Activated naive CD4-positive, alpha-beta T cell treated with anti-CD3 and anti-CD28 coated beads for 36 hours (primary cell): ENCODE measurements at regions of chr5 and their contacts with region 1.

Region 1: DNA sequence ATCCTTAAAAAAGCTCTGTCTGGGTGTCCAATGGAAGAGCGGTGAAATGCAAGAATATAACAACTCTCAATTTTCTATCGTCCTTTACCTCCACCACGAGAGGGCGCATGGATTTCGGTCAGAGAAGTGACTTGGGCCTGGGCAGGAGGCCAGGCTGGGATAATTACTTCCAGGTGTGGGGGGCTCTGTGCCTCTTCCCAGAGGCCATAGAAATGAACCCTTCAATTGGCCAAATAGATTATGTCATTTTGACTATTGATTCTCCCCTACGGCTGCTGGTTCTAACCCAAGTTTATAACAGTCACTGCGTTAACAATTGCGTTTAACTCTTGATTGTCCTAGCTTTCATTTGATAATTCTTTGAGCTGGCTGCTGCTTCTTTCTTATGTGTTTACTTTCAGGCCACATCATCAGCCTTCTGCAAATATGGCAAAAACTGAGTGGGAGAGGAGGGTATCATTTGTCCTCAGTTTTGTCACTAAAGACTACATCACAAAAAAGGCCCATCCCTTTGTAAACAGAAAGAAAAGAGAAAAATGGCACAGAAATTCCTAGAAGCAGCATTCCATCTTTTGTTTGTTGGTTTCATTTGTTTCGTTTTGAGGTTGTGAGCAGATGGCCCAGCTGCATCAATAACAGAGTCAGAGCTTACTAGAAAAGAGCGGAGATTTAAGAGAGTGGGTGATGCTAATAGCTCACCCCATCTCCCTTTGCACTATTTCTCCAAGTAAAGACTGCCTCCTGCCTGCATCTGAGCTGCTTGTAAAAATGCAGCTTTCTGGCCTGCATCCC is 45.4 kb upstream of the ZFR start:
- DNase-seq: peak; percentile 83
- H3K4me3 Mint-ChIP-seq: no peak overlapping the region
- H3K27ac Mint-ChIP-seq: no peak overlapping the region
- H3K4me1 Mint-ChIP-seq: peaks cover 1% of the 10 kb centered on the region
- H3K27me3 Mint-ChIP-seq: no peaks in the 10 kb centered on the region

Region 2: DNA sequence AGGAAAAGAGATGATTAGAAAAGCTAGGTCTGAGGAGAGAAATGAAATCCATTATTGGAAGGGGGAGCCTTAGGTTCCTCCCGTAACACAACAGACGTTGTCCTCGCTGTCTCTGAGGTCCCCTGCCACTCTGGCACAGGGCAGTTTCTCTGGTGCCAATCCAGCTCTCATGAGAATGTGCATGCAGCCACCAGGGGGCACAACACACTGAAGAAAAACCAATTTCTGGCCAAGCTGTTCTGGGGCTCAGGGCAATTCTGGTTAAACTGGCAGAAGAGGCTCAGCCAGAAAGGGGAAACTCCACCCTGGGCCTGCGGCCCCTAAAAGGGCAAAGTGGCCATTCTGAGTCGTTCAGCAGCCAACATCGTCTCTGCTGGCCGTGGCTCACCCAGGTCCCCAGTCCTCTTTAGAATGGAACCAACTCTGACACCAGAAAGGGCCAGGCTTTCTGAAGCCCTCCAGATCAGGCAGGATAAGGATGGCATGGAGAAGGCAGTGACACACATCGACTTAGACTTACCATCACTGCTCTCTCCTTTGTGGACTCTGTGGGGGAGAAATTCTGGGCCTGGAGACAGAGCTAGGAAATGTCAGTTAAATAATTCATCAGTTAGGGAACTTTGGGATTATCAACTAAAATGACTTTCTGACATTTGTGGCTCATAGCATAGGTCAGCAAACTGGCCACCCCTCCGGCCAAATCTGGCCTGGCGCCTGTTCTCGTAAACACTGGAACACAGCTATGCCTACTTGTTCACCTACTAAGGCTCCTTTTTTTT is 257.4 kb before region 1 on chr5:
- CTCF ChIA-PET with region 1: interaction called, 16 read pairs
- intact Hi-C with region 1: loop called (anchors 5 kb)
- DNase-seq: peak; percentile 88
- H3K4me3 Mint-ChIP-seq: no peak overlapping the region
- H3K27ac Mint-ChIP-seq: no peak overlapping the region
- H3K4me1 Mint-ChIP-seq: peaks cover 7% of the 10 kb centered on the region
- H3K27me3 Mint-ChIP-seq: no peaks in the 10 kb centered on the region

Region 3: GRCh38 chr5:32462618-32463017 is 27.4 kb before region 1 on chr5:
- CTCF ChIA-PET with region 1: interaction called, 6 read pairs
- intact Hi-C with region 1: loop called (anchors 2 kb)
- DNase-seq: peak; percentile 71
- H3K4me3 Mint-ChIP-seq: no peak overlapping the region
- H3K27ac Mint-ChIP-seq: peak overlapping the region; percentile 89
- H3K4me1 Mint-ChIP-seq: peaks cover 13% of the 10 kb centered on the region
- H3K27me3 Mint-ChIP-seq: no peaks in the 10 kb centered on the region

Region 4: GRCh38 chr5:32504989-32505596 is 15.1 kb after region 1 on chr5:
- CTCF ChIA-PET with region 1: interaction called, 28 read pairs
- intact Hi-C with region 1: no loop called
- DNase-seq: peak; percentile 26
- H3K4me3 Mint-ChIP-seq: no peak overlapping the region
- H3K27ac Mint-ChIP-seq: no peak overlapping the region
- H3K4me1 Mint-ChIP-seq: peaks cover 17% of the 10 kb centered on the region
- H3K27me3 Mint-ChIP-seq: no peaks in the 10 kb centered on the region

Region 5: GRCh38 chr5:32600057-32600622 is 110.2 kb after region 1 on chr5:
- CTCF ChIA-PET with region 1: interaction called, 11 read pairs
- intact Hi-C with region 1: no loop called
- DNase-seq: no peak
- H3K4me3 Mint-ChIP-seq: no peak overlapping the region
- H3K27ac Mint-ChIP-seq: no peak overlapping the region
- H3K4me1 Mint-ChIP-seq: peaks cover 47% of the 10 kb centered on the region
- H3K27me3 Mint-ChIP-seq: no peaks in the 10 kb centered on the region

Region 6: GRCh38 chr5:32709781-32710549 is 220.0 kb after region 1 on chr5:
- CTCF ChIA-PET with region 1: no interaction called
- intact Hi-C with region 1: no loop called
- DNase-seq: peak; percentile 75
- H3K4me3 Mint-ChIP-seq: peak overlapping the region; percentile 65
- H3K27ac Mint-ChIP-seq: no peak overlapping the region
- H3K4me1 Mint-ChIP-seq: peaks cover 26% of the 10 kb centered on the region
- H3K27me3 Mint-ChIP-seq: peaks cover 62% of the 10 kb centered on the region